Activated CD4-positive, alpha-beta memory T cell treated with anti-CD3 and anti-CD28 coated beads, Interleukin-2, amount 10 ng/mL, durations not matched to agents 7 days and 5 days (primary cell): ENCODE measurements at regions of chr12 and their contacts with region 1.

Region 1: GRCh38 chr12:55926738-55927587 is 731 bp downstream of the PYM1 start:
- DNase-seq: peak; percentile 95
- H3K4me3 Mint-ChIP-seq: peak overlapping the region; percentile 91
- H3K27ac Mint-ChIP-seq: peak overlapping the region; percentile 96
- H3K4me1 Mint-ChIP-seq: peaks cover 53% of the 10 kb centered on the region
- H3K27me3 Mint-ChIP-seq: no peaks in the 10 kb centered on the region

Region 2: DNA sequence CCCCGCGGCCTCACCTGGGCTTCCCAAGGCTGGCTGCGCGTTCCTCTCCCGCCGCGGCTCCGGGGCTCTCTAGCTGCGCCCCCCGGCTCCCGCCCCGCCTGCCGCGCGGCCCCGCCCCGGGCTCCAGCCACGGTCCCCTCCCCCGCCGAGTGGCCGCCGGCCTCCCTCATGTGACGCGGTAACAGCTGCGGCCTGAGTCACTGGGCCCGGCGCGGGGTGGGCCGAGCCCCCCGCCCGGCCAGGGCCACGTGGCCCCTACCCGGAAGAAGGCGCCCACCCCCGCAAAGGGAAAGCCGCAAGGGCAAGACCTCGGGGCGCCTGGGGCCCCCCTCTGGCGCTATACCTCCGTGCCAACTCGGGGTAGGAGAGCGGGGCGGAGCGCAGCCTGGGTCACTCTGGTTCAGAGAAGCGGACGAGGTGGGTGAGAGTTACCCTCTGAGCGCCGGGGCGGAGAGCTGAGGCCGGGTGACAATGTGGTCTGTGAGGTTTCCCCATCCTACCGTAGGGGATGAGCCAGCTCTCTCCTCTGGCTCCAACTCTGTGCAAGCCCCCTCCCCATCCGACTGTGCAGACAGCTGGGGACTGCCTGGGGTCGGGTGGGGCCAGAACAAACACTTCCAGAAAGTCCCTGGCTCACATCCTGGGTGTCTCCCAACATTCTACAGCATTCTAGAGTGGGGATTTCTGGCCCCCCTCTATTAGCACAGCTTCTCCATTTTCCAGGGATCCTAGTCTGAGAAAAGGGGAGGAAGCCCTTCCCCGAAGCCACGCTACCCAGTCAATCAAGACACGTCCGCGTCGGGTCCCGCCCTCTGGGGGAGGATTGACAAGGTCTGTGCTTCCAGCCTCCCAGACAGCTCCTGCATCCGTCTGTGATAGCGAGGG is 197.8 kb before region 1 on chr12 and contains the start of gene CD63:
- CTCF ChIA-PET with region 1: interaction called, 4 read pairs
- POLR2A ChIA-PET with region 1: interaction called, 10 read pairs
- DNase-seq: peak; percentile 67
- H3K4me3 Mint-ChIP-seq: peak within 1 kb of the TSS; percentile 87
- H3K27ac Mint-ChIP-seq: peak within 1 kb of the TSS; percentile 85
- H3K4me1 Mint-ChIP-seq: peaks cover 44% of the 10 kb centered on the region
- H3K27me3 Mint-ChIP-seq: no peaks in the 10 kb centered on the region
- total RNA-seq, gene CD63: 177 to 185 TPM

Region 3: DNA sequence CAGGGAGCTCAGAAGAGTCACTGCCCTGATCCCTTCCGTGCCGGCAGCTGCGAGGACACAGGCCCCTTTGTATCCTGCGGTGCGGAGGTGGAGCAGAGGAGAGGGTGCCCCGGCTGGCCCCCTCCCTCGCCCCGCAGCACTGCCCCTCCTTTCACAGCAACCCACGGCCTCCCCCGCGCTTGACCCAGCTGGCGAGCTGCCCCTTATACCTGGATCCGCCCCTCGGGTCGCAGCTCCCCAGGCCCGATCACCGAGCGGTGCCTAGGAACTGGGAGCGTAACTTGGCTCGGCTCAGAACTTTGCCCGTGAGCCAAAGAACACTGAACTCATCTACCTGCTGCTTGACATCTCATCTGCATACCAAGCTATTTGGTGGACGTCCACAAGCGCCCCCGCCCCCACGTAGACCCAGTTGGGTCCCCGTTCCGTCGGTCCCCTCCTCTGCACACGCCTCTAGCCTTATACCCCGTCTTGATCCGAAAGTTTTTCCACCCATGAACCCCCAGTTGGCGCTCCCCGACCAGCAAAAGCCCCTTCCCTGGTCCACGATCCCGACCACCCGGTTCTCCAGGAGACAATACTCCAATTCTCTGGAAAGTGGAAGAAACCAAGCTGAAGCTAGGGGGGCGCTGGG is 96.9 kb before region 1 on chr12:
- CTCF ChIA-PET with region 1: interaction called, 36 read pairs
- POLR2A ChIA-PET with region 1: interaction called, 61 read pairs
- DNase-seq: peak; percentile 50
- H3K4me3 Mint-ChIP-seq: peak overlapping the region; percentile 99
- H3K27ac Mint-ChIP-seq: peak overlapping the region; percentile 94
- H3K4me1 Mint-ChIP-seq: peaks cover 54% of the 10 kb centered on the region
- H3K27me3 Mint-ChIP-seq: no peaks in the 10 kb centered on the region

Region 4: GRCh38 chr12:55912908-55913307 is 14.1 kb before region 1 on chr12:
- CTCF ChIA-PET with region 1: interaction called, 7 read pairs
- POLR2A ChIA-PET with region 1: interaction called, 21 read pairs
- DNase-seq: no peak
- H3K4me3 Mint-ChIP-seq: no peak overlapping the region
- H3K27ac Mint-ChIP-seq: no peak overlapping the region
- H3K4me1 Mint-ChIP-seq: peaks cover 36% of the 10 kb centered on the region
- H3K27me3 Mint-ChIP-seq: no peaks in the 10 kb centered on the region

Region 5: GRCh38 chr12:55940065-55940732 is 13.2 kb after region 1 on chr12:
- CTCF ChIA-PET with region 1: interaction called, 59 read pairs
- POLR2A ChIA-PET with region 1: interaction called, 122 read pairs
- DNase-seq: peak; percentile 86
- H3K4me3 Mint-ChIP-seq: no peak overlapping the region
- H3K27ac Mint-ChIP-seq: peak overlapping the region; percentile 76
- H3K4me1 Mint-ChIP-seq: peaks cover 75% of the 10 kb centered on the region
- H3K27me3 Mint-ChIP-seq: no peaks in the 10 kb centered on the region

Region 6: GRCh38 chr12:55966408-55967281 is 39.7 kb after region 1 on chr12 and contains the start of gene CDK2:
- CTCF ChIA-PET with region 1: interaction called, 4 read pairs
- POLR2A ChIA-PET with region 1: interaction called, 11 read pairs
- DNase-seq: peak; percentile 91
- H3K4me3 Mint-ChIP-seq: peak within 1 kb of the TSS; percentile 94
- H3K27ac Mint-ChIP-seq: peak within 1 kb of the TSS; percentile 78
- H3K4me1 Mint-ChIP-seq: peaks cover 43% of the 10 kb centered on the region
- H3K27me3 Mint-ChIP-seq: no peaks in the 10 kb centered on the region
- total RNA-seq, gene CDK2: 88.9 to 98.9 TPM